ENCODE measurements at regions of chr3 and their contacts with region 1.

Region 1: DNA sequence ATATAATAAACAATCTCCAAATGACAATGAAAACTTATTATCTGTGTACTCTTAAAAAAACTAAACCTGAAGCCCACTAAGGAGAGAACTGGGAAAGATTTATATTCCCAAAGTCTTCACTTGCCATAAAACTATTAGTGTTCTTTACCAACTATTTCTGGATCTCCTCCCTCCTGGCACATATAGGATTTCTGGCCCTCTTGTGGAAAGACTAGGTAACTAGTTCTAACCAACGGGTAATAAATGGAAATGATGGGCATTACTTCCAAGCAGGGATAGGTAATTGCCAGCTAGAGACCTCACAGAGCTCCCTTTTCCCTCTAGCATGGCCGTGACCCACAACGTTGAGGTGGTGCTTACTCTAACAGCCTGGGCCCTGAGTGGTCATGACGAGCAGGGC is 110.1 kb downstream of the DNAH12 start:
- DNase-seq: peak; percentile 30
- H3K4me3 ChIP-seq: no peak overlapping the region
- H3K27ac ChIP-seq: no peak overlapping the region
- H3K4me1 ChIP-seq: no peaks in the 10 kb centered on the region
- H3K27me3 ChIP-seq: no peaks in the 10 kb centered on the region
- CTCF ChIP-seq: peak; percentile 61 to 71

Region 2: GRCh38 chr3:57169872-57170623 is 264.0 kb before region 1 on chr3:
- CTCF ChIA-PET with region 1: interaction called, 4 read pairs
- dilution Hi-C with region 1: no loop called
- in situ Hi-C with region 1: loop called in 1 of 2 experiments (anchors 10 kb)
- intact Hi-C with region 1: loop called (anchors 2 kb)
- DNase-seq: peak; percentile 48
- H3K4me3 ChIP-seq: peak overlapping the region; percentile 35 to 44 (median 41)
- H3K27ac ChIP-seq: no peak overlapping the region
- H3K4me1 ChIP-seq: peaks cover 5% of the 10 kb centered on the region
- H3K27me3 ChIP-seq: no peaks in the 10 kb centered on the region
- CTCF ChIP-seq: peak; percentile 46 to 79

Region 3: GRCh38 chr3:57179580-57180410 is 254.2 kb before region 1 on chr3:
- CTCF ChIA-PET with region 1: no interaction called
- dilution Hi-C with region 1: no loop called
- in situ Hi-C with region 1: loop called in 1 of 2 experiments (anchors 10 kb)
- intact Hi-C with region 1: loop called (anchors 2 kb)
- DNase-seq: no peak
- H3K4me3 ChIP-seq: no peak overlapping the region
- H3K27ac ChIP-seq: no peak overlapping the region
- H3K4me1 ChIP-seq: no peaks in the 10 kb centered on the region
- H3K27me3 ChIP-seq: no peaks in the 10 kb centered on the region
- CTCF ChIP-seq: peak; percentile 45 to 66

Region 4: GRCh38 chr3:57382933-57383332 is 51.1 kb before region 1 on chr3:
- CTCF ChIA-PET with region 1: interaction called, 14 read pairs
- dilution Hi-C with region 1: no loop called
- in situ Hi-C with region 1: no loop called
- intact Hi-C with region 1: no loop called
- DNase-seq: no peak
- H3K4me3 ChIP-seq: no peak overlapping the region
- H3K27ac ChIP-seq: no peak overlapping the region
- H3K4me1 ChIP-seq: no peaks in the 10 kb centered on the region
- H3K27me3 ChIP-seq: peaks cover 2% of the 10 kb centered on the region
- CTCF ChIP-seq: no peak

Region 5: DNA sequence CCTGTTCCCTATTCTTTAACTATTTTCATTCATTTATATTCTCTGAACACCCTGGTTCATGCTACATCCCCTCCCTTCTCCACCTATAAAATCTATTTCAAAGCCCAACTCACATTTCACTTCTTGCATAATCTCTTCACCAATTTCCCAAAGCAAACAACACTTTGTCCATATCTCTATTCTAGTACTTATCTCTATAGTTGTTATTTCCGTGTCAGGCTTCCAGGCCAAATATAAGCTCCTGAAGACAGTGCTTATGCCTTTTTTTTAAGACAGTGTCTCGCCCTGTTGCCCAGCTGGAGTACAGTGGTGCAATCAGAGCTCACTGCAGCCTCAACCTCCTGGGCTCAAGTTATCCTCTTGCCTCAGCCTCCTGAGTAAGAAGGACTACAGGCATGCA is 66.5 kb after region 1 on chr3:
- CTCF ChIA-PET with region 1: no interaction called
- dilution Hi-C with region 1: no loop called
- in situ Hi-C with region 1: no loop called
- intact Hi-C with region 1: no loop called
- DNase-seq: no peak
- H3K4me3 ChIP-seq: no peak overlapping the region
- H3K27ac ChIP-seq: no peak overlapping the region
- H3K4me1 ChIP-seq: no peaks in the 10 kb centered on the region
- H3K27me3 ChIP-seq: no peaks in the 10 kb centered on the region
- CTCF ChIP-seq: no peak

Measured in mammary epithelial cell (primary cell).